Heart right ventricle (tissue), 16 donors: ENCODE measurements at regions of chr17 and their contacts with region 1.

Region 1: GRCh38 chr17:3738562-3739295 is 15.0 kb downstream of the HASPIN start:
- DNase-seq: no peak
- ATAC-seq: peak in 7 of 8 donors; percentile 28 to 69 (median 50)
- H3K4me3 ChIP-seq: peak overlapping the region in 3 of 10 donors; percentile 32 to 39 (median 32)
- H3K27ac ChIP-seq: peak overlapping the region in 2 of 10 donors; percentile 20 to 48
- H3K4me1 ChIP-seq: peaks cover 0 to 17% (median 7%) of the 10 kb centered on the region in 9 donors
- H3K27me3 ChIP-seq: peaks cover 0 to 10% (median 0%) of the 10 kb centered on the region in 7 donors
- CTCF ChIP-seq: no peak

Region 2: GRCh38 chr17:3615160-3615870 is 123.4 kb before region 1 on chr17:
- intact Hi-C with region 1: no loop called
- DNase-seq: no peak
- ATAC-seq: no peak
- H3K4me3 ChIP-seq: no peak overlapping the region
- H3K27ac ChIP-seq: no peak overlapping the region
- H3K4me1 ChIP-seq: no peaks in the 10 kb centered on the region
- H3K27me3 ChIP-seq: no peaks in the 10 kb centered on the region
- CTCF ChIP-seq: no peak

Region 3: DNA sequence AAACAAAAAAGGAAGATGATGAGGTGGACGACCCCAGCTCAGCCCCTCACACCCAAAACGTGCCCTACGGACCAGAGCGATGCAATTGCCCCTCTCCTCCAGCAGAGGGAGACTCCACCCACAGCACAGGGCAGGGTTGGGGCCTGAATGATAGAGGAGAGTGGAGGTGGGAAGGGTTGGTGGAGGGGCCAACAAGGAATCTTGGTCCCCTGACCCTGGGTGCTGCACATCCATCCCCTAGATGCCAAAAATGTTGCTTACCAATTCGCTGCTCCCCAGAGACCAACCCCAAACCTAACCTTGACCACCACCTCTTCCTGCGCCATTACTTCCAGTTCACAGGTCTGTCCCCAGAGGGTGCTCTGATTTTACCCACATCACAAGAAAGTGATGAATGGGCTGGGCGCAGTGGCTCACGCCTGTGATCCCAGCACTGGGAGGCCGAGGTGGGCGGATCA is 55.6 kb before region 1 on chr17:
- intact Hi-C with region 1: loop called in 1 of 10 experiments (anchors 5 kb)
- DNase-seq: no peak
- ATAC-seq: peak; percentile 55 to 78 (median 70)
- H3K4me3 ChIP-seq: no peak overlapping the region
- H3K27ac ChIP-seq: no peak overlapping the region
- H3K4me1 ChIP-seq: peaks cover 0 to 11% (median 0%) of the 10 kb centered on the region in 9 donors
- H3K27me3 ChIP-seq: peaks cover 0 to 27% (median 18%) of the 10 kb centered on the region in 7 donors
- CTCF ChIP-seq: peak; percentile 73 to 96 (median 85)

Region 4: DNA sequence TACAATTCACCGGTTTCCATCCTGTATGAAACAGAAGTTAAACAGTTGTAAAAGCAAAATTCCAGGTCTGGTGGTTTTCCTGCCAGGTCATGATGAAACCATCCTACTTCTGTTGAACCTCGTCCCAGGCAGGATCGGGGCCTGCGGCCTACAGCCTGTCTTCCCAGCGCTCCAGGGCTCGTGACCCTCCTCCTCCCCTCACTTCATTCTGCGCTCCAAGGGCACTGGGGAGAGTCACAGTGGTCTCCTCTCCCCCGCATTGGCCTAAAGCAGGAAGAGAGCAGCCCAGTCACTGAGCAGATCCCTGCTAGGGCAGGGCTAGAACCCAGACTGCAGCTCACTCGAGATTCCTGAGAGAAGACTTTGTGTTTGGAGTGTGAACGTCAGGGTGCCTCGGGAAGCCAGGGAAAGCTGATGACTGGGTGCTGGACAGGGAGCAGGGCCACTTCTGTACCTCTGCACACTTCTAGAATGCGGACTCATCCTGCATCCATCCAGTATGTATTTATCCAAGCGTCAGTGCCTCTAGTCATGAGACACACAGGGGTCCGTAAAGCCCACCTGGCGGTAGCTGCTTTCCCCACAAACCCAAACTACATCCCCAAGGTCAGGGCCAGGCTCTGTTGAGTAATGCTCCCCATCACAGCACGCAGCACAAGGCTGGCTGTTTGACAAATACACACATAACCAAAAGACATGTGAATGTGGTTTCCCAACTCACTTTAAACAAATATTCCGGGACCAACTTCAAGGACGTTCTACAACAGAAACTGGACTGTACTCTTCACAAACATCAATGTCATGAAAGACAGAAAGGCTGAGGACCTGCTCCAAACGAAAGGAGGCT is 64.0 kb after region 1 on chr17:
- intact Hi-C with region 1: no loop called
- DNase-seq: no peak
- ATAC-seq: peak in 2 of 8 donors; percentile 24 to 47
- H3K4me3 ChIP-seq: no peak overlapping the region
- H3K27ac ChIP-seq: peak overlapping the region in 3 of 10 donors; percentile 20 to 80 (median 48)
- H3K4me1 ChIP-seq: peaks cover 0 to 60% (median 0%) of the 10 kb centered on the region in 9 donors
- H3K27me3 ChIP-seq: no peaks in the 10 kb centered on the region
- CTCF ChIP-seq: no peak

Region 5: GRCh38 chr17:3827124-3827773 is 88.5 kb after region 1 on chr17:
- intact Hi-C with region 1: loop called in 4 of 10 experiments (anchors 5 to 10 kb)
- DNase-seq: peak in 1 of 2 donors; percentile 25
- ATAC-seq: no peak
- H3K4me3 ChIP-seq: no peak overlapping the region
- H3K27ac ChIP-seq: peak overlapping the region in 5 of 10 donors; percentile 27 to 82 (median 73)
- H3K4me1 ChIP-seq: peaks cover 5 to 27% (median 15%) of the 10 kb centered on the region in 9 donors
- H3K27me3 ChIP-seq: no peaks in the 10 kb centered on the region
- CTCF ChIP-seq: peak in 8 of 9 donors; percentile 9 to 74 (median 46)

Region 6: DNA sequence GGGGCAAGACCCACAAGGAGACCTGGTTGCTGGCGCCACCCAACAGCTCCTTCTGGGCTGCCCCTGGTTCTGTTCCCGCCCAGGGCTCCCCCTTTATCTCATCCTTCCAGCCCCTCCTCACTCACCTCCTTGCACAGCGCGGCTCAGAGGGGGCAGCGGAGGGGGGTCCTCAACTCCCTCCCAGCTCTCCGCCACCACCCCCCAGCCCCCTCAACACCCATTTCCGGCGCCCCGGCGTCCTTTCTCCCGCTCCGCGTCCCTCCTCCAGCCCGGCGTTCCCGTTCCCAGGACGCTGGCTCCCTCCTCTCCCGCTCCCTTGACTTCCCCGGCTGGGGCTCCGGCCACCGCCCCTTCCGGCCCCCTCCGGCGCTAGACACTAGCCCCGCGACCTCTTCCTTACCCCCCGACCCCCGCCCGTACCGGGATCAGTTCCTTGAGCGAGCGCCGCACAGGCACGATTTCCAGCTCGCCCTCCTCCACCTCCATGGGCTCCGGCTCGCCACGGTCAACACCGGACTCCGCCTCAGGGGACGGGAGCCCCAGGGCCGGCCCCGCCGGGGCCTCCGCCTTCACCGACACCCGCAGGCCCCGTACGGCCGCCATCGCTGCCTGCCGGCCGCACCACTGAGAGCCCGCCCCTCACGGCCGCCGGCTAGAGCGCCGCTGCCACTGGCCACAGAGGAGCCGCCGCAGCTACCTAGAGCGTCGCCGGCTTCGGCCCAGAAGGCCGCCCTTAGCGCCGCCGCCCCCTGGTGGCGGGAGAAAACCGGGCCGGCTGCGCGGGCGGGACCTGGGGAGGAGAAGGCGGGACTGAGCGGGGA is 107.1 kb after region 1 on chr17 and contains the start of gene NCBP3:
- intact Hi-C with region 1: loop called in 1 of 10 experiments (anchors 5 kb)
- DNase-seq: peak; percentile 86 to 91
- ATAC-seq: peak; percentile 97 to 99 (median 98)
- H3K4me3 ChIP-seq: peak within 1 kb of the TSS; percentile 56 to 98 (median 90)
- H3K27ac ChIP-seq: peak within 1 kb of the TSS; percentile 42 to 99 (median 94)
- H3K4me1 ChIP-seq: peaks cover 5 to 27% (median 16%) of the 10 kb centered on the region in 9 donors
- H3K27me3 ChIP-seq: no peaks in the 10 kb centered on the region
- CTCF ChIP-seq: peak; percentile 90 to 99 (median 98)
- total RNA-seq, gene NCBP3: 14.6 to 30.9 (median 23.1) TPM